Mammary epithelial cell (primary cell): ENCODE measurements at regions of chr6 and their contacts with region 1.

Region 1: GRCh38 chr6:44180886-44181285 is 22.3 kb downstream of the CAPN11 start:
- DNase-seq: no peak
- H3K4me3 ChIP-seq: no peak overlapping the region
- H3K27ac ChIP-seq: no peak overlapping the region
- H3K4me1 ChIP-seq: peaks cover 8% of the 10 kb centered on the region
- H3K27me3 ChIP-seq: no peaks in the 10 kb centered on the region
- CTCF ChIP-seq: no peak

Region 2: DNA sequence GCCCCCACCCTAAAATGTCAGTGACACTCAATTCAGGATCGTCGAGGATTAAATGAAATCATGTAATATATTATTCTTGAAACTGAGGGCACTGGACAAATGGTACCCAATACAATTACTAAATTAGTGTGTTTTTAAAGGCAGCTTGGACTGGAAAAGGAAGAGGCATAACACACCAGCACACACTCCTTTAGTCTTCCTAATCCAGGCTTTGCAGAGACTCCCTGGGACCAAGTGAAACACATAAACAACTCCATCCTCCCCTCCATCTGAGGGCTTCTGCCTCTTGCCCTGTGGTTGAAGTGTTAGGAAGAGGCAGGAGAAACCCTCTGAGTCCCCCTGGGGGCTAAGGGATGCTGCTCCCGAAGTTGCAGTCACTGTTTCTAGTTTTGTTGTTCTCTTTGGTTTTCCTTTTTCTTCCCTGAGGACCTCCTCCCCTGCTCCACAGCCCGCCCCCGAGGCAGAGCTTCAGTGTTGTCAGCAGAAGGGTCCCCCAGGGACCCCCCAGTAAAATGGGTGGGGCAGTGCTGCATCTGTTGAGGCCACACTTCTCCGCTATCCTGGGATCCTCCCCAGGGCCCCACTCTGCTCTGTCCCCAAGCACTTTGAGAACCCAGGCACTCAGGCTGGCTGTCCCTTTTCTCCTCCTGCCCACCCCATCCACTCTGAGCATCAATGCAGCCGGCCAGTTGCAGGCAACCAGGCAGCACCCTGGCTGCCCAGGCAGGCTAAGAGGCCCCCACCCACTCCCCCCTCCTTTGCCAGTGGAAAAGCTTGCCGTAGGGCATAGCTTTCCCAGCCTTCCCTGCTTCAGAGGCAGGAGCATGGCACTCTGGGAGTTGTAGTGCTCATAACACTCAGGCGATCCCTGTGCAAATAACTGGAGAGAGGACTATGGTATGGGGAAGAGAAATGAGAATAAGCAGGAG is 47.6 kb before region 1 on chr6:
- CTCF ChIA-PET with region 1: no interaction called
- dilution Hi-C with region 1: loop called (anchors 5 kb)
- in situ Hi-C with region 1: no loop called
- intact Hi-C with region 1: no loop called
- DNase-seq: peak; percentile 25
- H3K4me3 ChIP-seq: no peak overlapping the region
- H3K27ac ChIP-seq: no peak overlapping the region
- H3K4me1 ChIP-seq: peaks cover 19% of the 10 kb centered on the region
- H3K27me3 ChIP-seq: no peaks in the 10 kb centered on the region
- CTCF ChIP-seq: no peak

Region 3: DNA sequence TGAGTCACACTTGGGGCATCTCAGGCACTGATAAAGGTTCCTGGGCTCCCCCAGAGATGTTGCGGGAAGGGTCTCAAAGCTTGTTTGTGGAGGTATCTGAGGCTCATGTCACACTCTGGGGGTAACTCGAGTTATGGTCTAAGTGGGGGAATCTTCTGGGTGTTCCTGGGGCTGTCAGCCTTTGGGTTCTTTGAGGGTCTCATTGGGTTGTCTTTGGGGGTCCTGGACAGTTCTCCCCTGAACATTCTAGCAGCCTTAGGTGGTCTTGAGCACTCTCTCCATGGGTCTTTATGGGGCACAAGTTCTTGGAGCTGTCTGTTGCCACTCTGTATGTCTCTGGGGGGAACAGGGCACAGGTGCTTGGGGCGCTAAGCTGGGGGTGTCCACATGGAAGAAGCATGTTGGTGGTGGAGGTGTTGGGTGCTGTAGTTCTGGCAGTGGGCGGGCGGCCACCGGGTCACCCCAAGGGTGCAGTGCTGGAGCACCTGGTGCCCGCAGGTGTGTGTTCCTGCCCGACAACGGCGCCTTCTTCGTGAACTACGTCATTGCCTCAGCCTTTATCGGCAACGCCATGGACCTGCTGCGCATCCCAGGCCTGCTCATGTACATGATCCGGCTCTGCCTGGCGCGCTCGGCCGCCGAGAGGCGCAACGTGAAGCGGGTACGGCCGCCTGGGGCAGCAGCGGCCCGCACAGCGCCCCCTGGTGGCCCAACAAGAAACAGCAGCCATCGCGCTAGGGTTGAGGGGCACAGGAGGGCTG is 29.4 kb before region 1 on chr6:
- CTCF ChIA-PET with region 1: no interaction called
- dilution Hi-C with region 1: no loop called
- in situ Hi-C with region 1: no loop called
- intact Hi-C with region 1: no loop called
- DNase-seq: peak; percentile 48
- H3K4me3 ChIP-seq: no peak overlapping the region
- H3K27ac ChIP-seq: no peak overlapping the region
- H3K4me1 ChIP-seq: no peaks in the 10 kb centered on the region
- H3K27me3 ChIP-seq: no peaks in the 10 kb centered on the region
- CTCF ChIP-seq: peak; percentile 94 to 99

Region 4: GRCh38 chr6:44166591-44167184 is 14.2 kb before region 1 on chr6:
- CTCF ChIA-PET with region 1: no interaction called
- dilution Hi-C with region 1: no loop called
- in situ Hi-C with region 1: no loop called
- intact Hi-C with region 1: no loop called
- DNase-seq: no peak
- H3K4me3 ChIP-seq: no peak overlapping the region
- H3K27ac ChIP-seq: no peak overlapping the region
- H3K4me1 ChIP-seq: no peaks in the 10 kb centered on the region
- H3K27me3 ChIP-seq: no peaks in the 10 kb centered on the region
- CTCF ChIP-seq: no peak